CD8-positive, alpha-beta T cell (primary cell): ENCODE measurements at regions of chr6 and their contacts with region 1.

Region 1: DNA sequence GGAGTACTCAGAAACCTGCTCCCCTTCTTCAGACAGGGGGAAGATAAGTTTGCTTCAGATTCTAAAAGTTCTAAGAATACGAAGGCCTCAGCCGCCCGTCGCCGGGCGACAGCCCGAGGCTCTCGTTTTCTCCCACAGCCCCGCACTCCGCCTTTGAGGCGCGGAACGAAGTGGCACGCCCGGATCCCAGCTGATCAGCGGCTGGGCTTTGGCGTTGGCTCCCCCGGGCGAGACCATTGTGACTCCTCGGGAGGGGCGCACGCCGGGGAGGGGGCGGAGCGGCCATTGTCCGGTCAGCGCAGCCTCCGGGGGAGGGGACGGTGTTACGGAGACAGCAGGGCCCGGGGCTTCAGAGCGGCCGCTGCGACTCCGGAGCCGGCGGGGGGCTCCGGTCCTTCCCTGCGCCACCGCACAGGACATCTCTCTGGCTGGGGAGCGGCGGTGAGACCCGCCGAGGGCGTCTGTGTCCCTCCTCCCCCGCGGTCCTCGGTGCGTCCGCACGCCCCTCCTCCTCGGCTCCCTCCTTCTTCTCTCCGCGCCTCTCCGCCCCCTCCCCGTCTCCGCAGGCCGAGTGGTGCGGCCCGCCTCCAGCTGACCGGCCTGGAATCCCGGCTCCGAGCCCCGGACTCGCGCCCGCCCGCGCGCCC is at the start of gene ZFAND3:
- DNase-seq: peak; percentile 83 to 97 (median 92)
- ATAC-seq: peak; percentile 81
- H3K4me3 ChIP-seq: peak within 1 kb of the TSS; percentile 73 to 92
- H3K4me3 Mint-ChIP-seq: peak within 1 kb of the TSS; percentile 96
- H3K27ac ChIP-seq: peak within 1 kb of the TSS; percentile 93 to 98
- H3K27ac Mint-ChIP-seq: peak within 1 kb of the TSS; percentile 98
- H3K4me1 ChIP-seq: peaks cover 39% of the 10 kb centered on the region
- H3K4me1 Mint-ChIP-seq: peaks cover 59% of the 10 kb centered on the region
- H3K27me3 ChIP-seq: no peaks in the 10 kb centered on the region
- H3K27me3 Mint-ChIP-seq: no peaks in the 10 kb centered on the region
- CTCF ChIP-seq: no peak
- total RNA-seq, gene ZFAND3: 28.4 to 29.9 TPM

Region 2: DNA sequence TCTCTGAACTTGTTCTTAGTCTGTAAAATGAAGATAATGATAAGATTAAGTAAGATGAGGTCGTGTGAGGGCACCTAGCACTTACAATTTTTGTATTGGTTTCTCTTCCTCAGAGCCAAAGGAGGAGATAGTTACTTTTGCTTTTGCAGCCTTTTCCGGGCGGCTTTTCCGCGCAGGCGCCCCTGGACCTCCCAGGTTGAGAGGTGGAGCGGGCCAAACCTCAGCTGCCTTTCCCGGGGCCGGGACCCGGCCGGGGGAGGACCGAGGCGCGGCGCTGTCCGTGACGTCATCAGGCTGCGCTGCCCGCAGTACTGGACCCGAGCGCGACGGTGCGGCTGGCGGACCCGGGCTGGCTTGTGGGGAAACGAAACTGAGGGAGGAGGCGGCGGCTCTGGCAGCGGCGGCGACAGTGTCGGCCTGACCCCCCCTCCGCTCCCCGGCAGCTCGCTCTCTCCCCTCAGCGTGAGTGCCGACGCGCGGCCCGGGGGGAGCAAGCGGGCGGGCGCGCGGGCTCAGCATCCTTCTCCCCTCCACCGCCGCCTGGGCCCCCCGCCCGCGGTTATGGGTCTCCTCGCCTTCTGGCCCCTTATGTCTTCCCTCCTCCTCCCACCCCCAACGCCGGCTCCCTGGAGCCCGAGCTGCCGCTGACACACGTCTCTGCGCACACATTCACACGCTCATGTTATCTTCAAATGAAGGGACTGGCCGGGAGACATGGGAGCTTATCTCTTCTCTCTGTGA is 386.2 kb before region 1 on chr6 and contains the start of gene CMTR1:
- CTCF ChIA-PET with region 1: no interaction called
- POLR2A ChIA-PET with region 1: no interaction called
- intact Hi-C with region 1: loop called in 1 of 2 experiments (anchors 5 kb)
- DNase-seq: peak; percentile 93 to 98 (median 97)
- ATAC-seq: peak; percentile 85
- H3K4me3 ChIP-seq: peak within 1 kb of the TSS; percentile 71 to 79
- H3K4me3 Mint-ChIP-seq: peak within 1 kb of the TSS; percentile 94
- H3K27ac ChIP-seq: peak within 1 kb of the TSS; percentile 84 to 90
- H3K27ac Mint-ChIP-seq: peak within 1 kb of the TSS; percentile 97
- H3K4me1 ChIP-seq: peaks cover 9% of the 10 kb centered on the region
- H3K4me1 Mint-ChIP-seq: peaks cover 41% of the 10 kb centered on the region
- H3K27me3 ChIP-seq: no peaks in the 10 kb centered on the region
- H3K27me3 Mint-ChIP-seq: peaks cover 7% of the 10 kb centered on the region
- CTCF ChIP-seq: no peak
- total RNA-seq, gene CMTR1: 74.8 to 79.5 TPM

Region 3: GRCh38 chr6:37791156-37791919 is 28.0 kb before region 1 on chr6:
- CTCF ChIA-PET with region 1: interaction called, 4 read pairs
- POLR2A ChIA-PET with region 1: no interaction called
- intact Hi-C with region 1: loop called (anchors 1 to 2 kb)
- DNase-seq: peak; percentile 44 to 84 (median 80)
- ATAC-seq: peak; percentile 99
- H3K4me3 ChIP-seq: no peak overlapping the region
- H3K4me3 Mint-ChIP-seq: no peak overlapping the region
- H3K27ac ChIP-seq: no peak overlapping the region
- H3K27ac Mint-ChIP-seq: no peak overlapping the region
- H3K4me1 ChIP-seq: peaks cover 7% of the 10 kb centered on the region
- H3K4me1 Mint-ChIP-seq: peaks cover 3% of the 10 kb centered on the region
- H3K27me3 ChIP-seq: no peaks in the 10 kb centered on the region
- H3K27me3 Mint-ChIP-seq: no peaks in the 10 kb centered on the region
- CTCF ChIP-seq: peak; percentile 66

Region 4: GRCh38 chr6:37845026-37845911 is 26.0 kb after region 1 on chr6:
- CTCF ChIA-PET with region 1: no interaction called
- POLR2A ChIA-PET with region 1: interaction called, 14 read pairs
- intact Hi-C with region 1: loop called in 1 of 2 experiments (anchors 5 kb)
- DNase-seq: no peak
- ATAC-seq: no peak
- H3K4me3 ChIP-seq: no peak overlapping the region
- H3K4me3 Mint-ChIP-seq: no peak overlapping the region
- H3K27ac ChIP-seq: no peak overlapping the region
- H3K27ac Mint-ChIP-seq: peak overlapping the region; percentile 16
- H3K4me1 ChIP-seq: peaks cover 37% of the 10 kb centered on the region
- H3K4me1 Mint-ChIP-seq: peaks cover 75% of the 10 kb centered on the region
- H3K27me3 ChIP-seq: no peaks in the 10 kb centered on the region
- H3K27me3 Mint-ChIP-seq: no peaks in the 10 kb centered on the region
- CTCF ChIP-seq: no peak

Region 5: GRCh38 chr6:38639498-38640215 is 820.4 kb after region 1 on chr6 and contains the start of gene BTBD9:
- CTCF ChIA-PET with region 1: no interaction called
- POLR2A ChIA-PET with region 1: no interaction called
- intact Hi-C with region 1: loop called (anchors 1 to 5 kb)
- DNase-seq: peak; percentile 71 to 94 (median 80)
- ATAC-seq: peak; percentile 79
- H3K4me3 ChIP-seq: peak within 1 kb of the TSS; percentile 81 to 87
- H3K4me3 Mint-ChIP-seq: peak within 1 kb of the TSS; percentile 91
- H3K27ac ChIP-seq: peak within 1 kb of the TSS; percentile 92 to 99
- H3K27ac Mint-ChIP-seq: peak within 1 kb of the TSS; percentile 85
- H3K4me1 ChIP-seq: peaks cover 32% of the 10 kb centered on the region
- H3K4me1 Mint-ChIP-seq: peaks cover 52% of the 10 kb centered on the region
- H3K27me3 ChIP-seq: no peaks in the 10 kb centered on the region
- H3K27me3 Mint-ChIP-seq: no peaks in the 10 kb centered on the region
- CTCF ChIP-seq: no peak
- total RNA-seq, gene BTBD9: 54.2 to 54.5 TPM